ENCODE measurements at regions of chr7 and their contacts with region 1.

Region 1: GRCh38 chr7:4631664-4632171 is 50.4 kb upstream of the FOXK1 start:
- DNase-seq: peak; percentile 76 to 79
- H3K4me3 ChIP-seq: peak overlapping the region; percentile 36; the same call in 1 of the 2 replicates
- H3K27ac ChIP-seq: no peak overlapping the region
- H3K4me1 ChIP-seq: peaks cover 13% of the 10 kb centered on the region
- H3K27me3 ChIP-seq: peaks cover 25% of the 10 kb centered on the region
- CTCF ChIP-seq: peak; percentile 78

Region 2: GRCh38 chr7:2870471-2870931 is 1761.2 kb before region 1 on chr7:
- CTCF ChIA-PET with region 1: no interaction called
- POLR2A ChIA-PET with region 1: no interaction called
- intact Hi-C with region 1: loop called (anchors 5 kb)
- DNase-seq: peak; percentile 48 to 81
- H3K4me3 ChIP-seq: no peak overlapping the region
- H3K27ac ChIP-seq: no peak overlapping the region
- H3K4me1 ChIP-seq: peaks cover 17% of the 10 kb centered on the region
- H3K27me3 ChIP-seq: no peaks in the 10 kb centered on the region
- CTCF ChIP-seq: no peak

Region 3: DNA sequence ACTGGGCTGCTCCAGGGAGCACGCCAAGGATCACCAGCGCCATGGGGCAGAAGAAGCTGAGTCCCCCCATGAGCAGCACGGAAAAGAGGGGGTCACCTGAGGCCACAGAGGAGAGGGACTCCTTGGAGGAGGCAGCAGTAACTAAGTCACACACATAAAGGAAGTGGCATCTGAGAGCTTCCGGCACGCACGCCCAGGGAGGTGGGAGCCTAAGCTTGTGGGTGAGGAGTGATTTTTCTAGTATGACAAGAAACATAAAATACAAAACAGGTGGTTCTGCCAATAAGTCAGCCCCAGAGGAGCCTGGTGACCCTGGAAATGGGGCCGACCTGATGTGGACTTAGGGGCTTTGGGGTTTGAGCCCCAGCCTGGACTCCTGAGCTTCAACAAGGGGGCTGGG is 1648.9 kb before region 1 on chr7:
- CTCF ChIA-PET with region 1: no interaction called
- POLR2A ChIA-PET with region 1: interaction called, 19 read pairs
- intact Hi-C with region 1: no loop called
- DNase-seq: no peak
- H3K4me3 ChIP-seq: no peak overlapping the region
- H3K27ac ChIP-seq: no peak overlapping the region
- H3K4me1 ChIP-seq: no peaks in the 10 kb centered on the region
- H3K27me3 ChIP-seq: no peaks in the 10 kb centered on the region
- CTCF ChIP-seq: no peak

Region 4: GRCh38 chr7:4610768-4611467 is 20.8 kb before region 1 on chr7:
- CTCF ChIA-PET with region 1: no interaction called
- POLR2A ChIA-PET with region 1: no interaction called
- intact Hi-C with region 1: loop called (anchors 1 kb)
- DNase-seq: peak; percentile 66 to 71
- H3K4me3 ChIP-seq: no peak overlapping the region
- H3K27ac ChIP-seq: no peak overlapping the region
- H3K4me1 ChIP-seq: no peaks in the 10 kb centered on the region
- H3K27me3 ChIP-seq: peaks cover 36% of the 10 kb centered on the region
- CTCF ChIP-seq: peak; percentile 91

Region 5: DNA sequence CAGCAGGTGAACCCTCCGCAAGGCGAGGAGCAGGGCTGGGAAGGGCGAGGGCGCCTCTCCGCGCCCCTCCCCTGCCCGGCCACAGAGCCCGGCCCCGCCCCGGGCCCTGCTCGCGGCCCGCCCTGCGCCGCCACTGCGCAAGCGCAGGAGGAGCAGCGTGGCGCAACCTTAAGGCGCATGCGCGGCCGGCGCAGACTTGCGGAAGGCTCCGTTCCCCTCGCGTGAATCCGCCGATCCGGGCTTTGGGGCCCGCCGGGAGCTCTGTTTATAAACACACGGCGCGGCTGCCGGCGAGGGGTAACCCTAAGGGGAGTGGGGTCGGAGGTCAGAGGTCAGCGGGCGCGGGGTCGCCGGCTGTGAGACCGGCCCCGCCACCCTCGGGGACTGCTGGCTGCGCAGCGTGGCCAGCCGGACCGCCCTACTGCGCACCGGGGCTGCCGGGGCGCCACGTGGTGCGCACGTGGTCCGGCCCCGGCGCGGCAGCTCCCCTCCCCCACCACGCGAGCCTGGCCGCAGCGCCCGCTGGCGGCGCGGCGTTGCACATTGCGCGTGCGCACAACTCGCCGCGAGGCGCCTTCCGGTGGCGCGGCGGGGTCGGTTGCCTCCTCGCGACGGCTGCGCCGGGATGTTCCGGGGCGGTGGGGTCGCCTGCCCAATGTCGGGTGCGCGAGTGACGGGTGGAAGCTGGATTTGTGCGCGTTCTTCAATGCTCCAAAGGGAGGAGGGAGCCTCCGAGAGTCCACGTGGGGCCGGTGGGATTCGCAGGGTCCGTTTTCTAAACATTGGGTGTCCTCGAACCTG is 10.1 kb after region 1 on chr7:
- CTCF ChIA-PET with region 1: interaction called, 5 read pairs
- POLR2A ChIA-PET with region 1: interaction called, 16 read pairs
- intact Hi-C with region 1: no loop called
- DNase-seq: peak; percentile 84 to 99
- H3K4me3 ChIP-seq: peak overlapping the region; percentile 69
- H3K27ac ChIP-seq: peak overlapping the region; percentile 92
- H3K4me1 ChIP-seq: peaks cover 6% of the 10 kb centered on the region
- H3K27me3 ChIP-seq: no peaks in the 10 kb centered on the region
- CTCF ChIP-seq: no peak; the same call in 1 of the 2 replicates

Region 6: DNA sequence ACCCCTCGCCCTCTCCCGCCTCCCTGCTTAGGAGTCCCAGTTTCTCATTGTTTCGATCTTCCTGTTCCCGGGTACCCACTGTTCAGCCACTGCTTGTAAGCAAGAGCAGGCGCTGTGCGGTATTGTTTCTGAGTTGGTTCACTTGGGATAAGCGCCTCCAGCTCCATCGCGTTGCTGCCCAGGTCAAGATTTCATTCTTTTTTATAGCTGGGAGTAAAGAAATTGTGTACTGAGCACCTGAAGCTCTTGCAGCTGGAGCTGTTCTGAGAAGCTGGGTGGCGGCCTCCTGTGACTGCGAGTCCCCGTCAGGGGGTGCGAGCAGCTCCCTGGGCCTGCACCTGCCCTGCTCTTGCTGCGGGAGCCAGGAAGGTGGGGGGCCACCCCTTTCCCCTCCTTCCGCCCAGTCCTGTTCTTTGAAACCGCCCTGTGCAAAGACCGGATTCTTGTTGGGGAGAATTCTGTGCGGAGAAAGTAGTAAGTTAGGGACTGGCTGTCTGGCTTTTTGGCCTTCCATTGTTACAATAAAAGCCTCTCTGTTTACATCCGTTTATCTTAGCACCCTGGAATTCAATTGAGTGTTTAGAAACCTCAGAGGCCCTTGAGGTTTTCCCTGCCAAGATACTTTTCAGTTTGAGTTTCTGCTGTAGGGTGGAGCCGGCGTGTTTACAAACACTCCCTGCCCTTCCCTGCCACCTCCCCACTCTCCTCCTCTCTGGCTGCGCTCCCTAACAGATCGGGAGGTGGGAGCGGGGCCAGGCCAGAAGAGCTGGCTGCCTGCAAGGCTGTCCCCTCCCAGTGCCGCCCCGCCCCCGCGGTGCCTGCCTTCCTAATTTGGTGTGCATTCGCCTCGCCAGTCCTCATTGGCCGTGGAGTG is 112.9 kb after region 1 on chr7:
- CTCF ChIA-PET with region 1: interaction called, 3 read pairs
- POLR2A ChIA-PET with region 1: interaction called, 11 read pairs
- intact Hi-C with region 1: no loop called
- DNase-seq: peak; percentile 98 to 100
- H3K4me3 ChIP-seq: peak overlapping the region; percentile 30; the same call in 1 of the 2 replicates
- H3K27ac ChIP-seq: peak overlapping the region; percentile 93
- H3K4me1 ChIP-seq: peaks cover 37% of the 10 kb centered on the region
- H3K27me3 ChIP-seq: no peaks in the 10 kb centered on the region
- CTCF ChIP-seq: no peak

Region 7: GRCh38 chr7:4753711-4754432 is 122.2 kb after region 1 on chr7:
- CTCF ChIA-PET with region 1: no interaction called
- POLR2A ChIA-PET with region 1: no interaction called
- intact Hi-C with region 1: loop called (anchors 5 kb)
- DNase-seq: peak; percentile 53 to 89
- H3K4me3 ChIP-seq: no peak overlapping the region
- H3K27ac ChIP-seq: no peak overlapping the region
- H3K4me1 ChIP-seq: no peaks in the 10 kb centered on the region
- H3K27me3 ChIP-seq: no peaks in the 10 kb centered on the region
- CTCF ChIP-seq: peak; percentile 96

Region 8: DNA sequence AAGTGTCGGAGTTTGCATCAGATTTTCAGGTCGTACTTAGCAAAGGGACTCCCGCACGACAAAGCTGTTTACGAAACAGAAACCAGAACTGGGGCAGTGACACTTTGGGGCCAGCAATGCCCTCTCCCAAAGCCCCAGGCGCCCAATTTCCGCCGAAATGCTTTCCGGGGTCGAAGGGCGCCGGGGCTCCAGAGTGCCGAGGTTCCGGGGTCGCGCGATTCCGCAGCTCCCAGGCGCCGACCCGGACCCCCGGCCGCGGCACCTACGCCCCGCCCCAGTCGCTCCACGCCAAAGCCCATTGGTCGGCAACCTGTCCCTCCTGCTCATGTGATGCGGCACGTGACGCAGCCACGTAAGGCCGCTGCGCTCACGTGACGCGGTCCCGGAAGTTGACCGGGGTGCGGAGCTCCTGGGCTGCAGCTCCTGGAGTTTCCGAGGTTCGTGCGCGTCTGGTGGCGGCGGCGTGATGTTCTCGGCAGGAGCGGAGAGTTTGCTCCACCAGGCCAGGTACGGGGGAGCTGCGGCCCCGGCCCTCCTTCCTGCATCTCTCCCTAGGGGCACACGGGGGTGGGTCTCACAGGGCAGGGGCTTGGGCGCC is 143.6 kb after region 1 on chr7 and contains the start of gene AP5Z1:
- CTCF ChIA-PET with region 1: no interaction called
- POLR2A ChIA-PET with region 1: no interaction called
- intact Hi-C with region 1: no loop called
- DNase-seq: peak; percentile 93
- H3K4me3 ChIP-seq: peak within 1 kb of the TSS; percentile 82
- H3K27ac ChIP-seq: peak within 1 kb of the TSS; percentile 74
- H3K4me1 ChIP-seq: peaks cover 16% of the 10 kb centered on the region
- H3K27me3 ChIP-seq: no peaks in the 10 kb centered on the region
- CTCF ChIP-seq: no peak
- total RNA-seq, gene AP5Z1: 40.6 and 44.0 TPM in 2 replicates